ENCODE measurements at regions of chr6 and their contacts with region 1.

Region 1: DNA sequence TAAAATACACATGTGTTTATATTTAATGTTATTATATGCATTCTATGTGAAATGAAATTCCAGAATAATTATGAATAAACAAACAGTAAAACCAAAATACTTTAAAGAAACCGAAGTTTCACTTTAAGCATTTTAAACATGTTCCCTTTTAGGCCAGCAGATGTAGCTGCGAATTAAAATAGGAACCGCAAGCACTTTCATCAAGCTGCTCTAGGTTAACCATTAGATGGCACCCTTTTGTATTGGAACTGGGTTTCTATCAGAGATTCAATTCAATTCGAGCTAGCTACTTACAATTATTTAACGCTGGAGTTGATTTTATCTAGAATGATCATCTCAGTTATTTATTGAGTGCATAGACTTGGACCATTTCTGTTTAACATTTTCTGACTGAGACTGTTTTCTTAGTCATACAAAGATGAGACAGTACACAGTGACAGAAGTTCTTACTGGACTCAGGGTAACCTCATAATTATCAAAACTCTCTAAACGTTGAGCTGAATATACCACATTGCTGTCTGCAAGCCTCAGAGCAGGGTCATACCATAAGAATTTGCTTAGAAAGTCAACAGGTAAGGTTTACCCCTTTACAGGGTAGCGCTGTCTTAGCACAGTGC is 8.5 kb downstream of the TMEM242 start:
- DNase-seq: no peak

Region 2: DNA sequence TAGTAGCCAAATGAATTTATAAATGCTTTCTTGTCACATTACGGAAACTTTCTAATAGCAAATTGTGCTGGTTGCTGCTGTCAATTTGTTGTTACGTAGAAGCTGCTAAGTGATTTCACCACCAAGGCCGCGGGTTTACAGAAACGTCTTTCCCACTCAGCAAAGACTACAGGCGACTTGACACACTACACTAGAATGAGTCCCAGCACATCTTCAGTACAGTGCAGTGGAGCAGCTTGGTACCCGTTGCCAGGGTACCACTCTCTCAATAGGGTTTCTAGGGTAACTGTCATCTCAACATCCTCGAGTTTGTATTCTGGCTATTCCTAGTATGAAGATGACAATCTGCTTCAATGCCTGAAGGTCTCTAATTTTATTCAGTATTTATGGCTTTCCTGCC is 43.5 kb after region 1 on chr6:
- intact Hi-C with region 1: no loop called
- DNase-seq: no peak

Region 3: DNA sequence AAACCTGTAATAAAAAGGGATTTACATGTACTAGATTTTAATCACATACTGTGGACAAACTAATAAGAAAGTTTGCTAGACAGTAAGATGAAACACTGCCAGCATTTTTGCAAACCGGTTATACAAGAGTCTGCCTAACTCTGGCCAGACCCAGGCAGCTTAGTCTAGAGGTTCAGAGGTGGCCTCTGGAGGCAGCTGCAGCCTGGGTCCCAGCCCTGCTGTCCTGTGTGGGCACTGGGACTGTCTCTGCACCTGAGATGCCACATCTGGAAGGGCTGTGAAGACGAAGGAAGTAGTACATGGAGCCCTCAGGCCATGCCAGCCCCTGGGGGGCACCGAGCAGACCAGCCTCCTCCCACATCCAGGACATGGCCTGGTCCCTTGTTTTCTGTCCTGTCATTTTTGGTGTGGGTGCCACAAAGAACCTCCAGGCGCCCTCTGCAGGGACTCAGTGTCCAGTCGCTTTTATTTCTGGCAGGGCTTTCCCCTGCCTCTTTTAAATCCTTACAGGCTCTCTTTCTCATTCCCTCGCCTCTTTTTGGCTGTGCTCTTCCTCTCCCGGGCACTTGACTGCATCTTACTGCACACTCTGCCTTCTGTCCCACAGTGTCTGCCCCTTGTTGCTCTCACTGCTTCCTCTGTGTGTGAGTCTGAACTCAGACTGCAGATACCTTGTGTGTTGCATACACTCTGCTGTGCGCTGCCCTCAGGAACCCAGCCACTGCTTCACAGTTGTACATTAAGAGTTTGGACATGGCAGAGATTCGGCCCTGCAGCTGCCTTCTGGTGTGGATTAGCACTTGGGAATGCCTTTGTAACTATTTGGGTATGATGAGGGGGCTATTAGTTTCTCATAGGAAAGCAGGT is 282.9 kb after region 1 on chr6:
- intact Hi-C with region 1: loop called (anchors 10 kb)
- DNase-seq: peak; percentile 84

Region 4: GRCh38 chr6:157974341-157974894 is 659.6 kb after region 1 on chr6:
- intact Hi-C with region 1: loop called in 1 of 2 experiments (anchors 10 kb)
- DNase-seq: no peak